PC-3 (cell line): ENCODE measurements at regions of chr20 and their contacts with region 1.

Region 1: GRCh38 chr20:56202493-56203077 is 45.9 kb upstream of the MC3R start:
- DNase-seq: peak; percentile 64
- ATAC-seq: peak; percentile 53
- H3K4me3 ChIP-seq: no peak overlapping the region
- H3K27ac ChIP-seq: no peak overlapping the region
- H3K4me1 ChIP-seq: no peaks in the 10 kb centered on the region
- H3K27me3 ChIP-seq: peaks cover 12% of the 10 kb centered on the region; the same call in 1 of the 2 replicates
- CTCF ChIP-seq: peak; percentile 78

Region 2: DNA sequence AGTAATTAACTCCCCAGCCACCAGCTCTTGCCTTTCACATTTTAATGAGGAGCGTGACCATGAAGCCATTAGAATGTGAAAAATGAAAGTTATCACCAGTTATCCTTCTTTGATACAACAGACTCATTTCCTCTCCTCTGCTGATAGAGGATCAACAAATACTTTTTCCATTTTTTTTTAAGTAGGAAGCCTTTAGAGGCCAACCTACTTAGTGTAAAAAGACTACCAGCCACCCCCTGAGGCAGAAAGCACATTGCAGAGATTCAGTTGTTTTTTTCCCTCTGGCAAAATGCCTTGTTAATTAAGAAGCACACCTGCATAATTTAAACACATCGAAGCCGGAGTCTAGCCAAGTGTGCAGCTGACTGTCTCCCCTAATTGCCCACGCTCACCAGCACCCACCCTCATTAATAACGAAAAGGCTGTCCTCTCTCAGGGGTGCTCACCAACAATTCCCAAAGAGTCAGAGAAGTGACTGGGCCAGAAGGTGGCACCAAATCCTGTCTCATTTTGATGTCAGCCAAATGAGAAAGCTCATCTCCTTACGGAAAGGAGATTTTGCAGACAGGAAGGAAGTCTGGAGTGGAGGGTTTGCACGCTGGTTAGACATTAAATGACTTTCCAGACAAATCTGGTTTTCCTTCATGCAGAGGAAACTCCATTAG is 14.9 kb before region 1 on chr20:
- CTCF ChIA-PET with region 1: no interaction called
- POLR2A ChIA-PET with region 1: no interaction called
- intact Hi-C with region 1: no loop called
- DNase-seq: peak; percentile 59
- ATAC-seq: peak; percentile 45; the same call in 1 of the 2 replicates
- H3K4me3 ChIP-seq: no peak overlapping the region
- H3K27ac ChIP-seq: no peak overlapping the region
- H3K4me1 ChIP-seq: no peaks in the 10 kb centered on the region
- H3K27me3 ChIP-seq: peaks cover 5% of the 10 kb centered on the region; the same call in 1 of the 2 replicates
- CTCF ChIP-seq: peak; percentile 67

Region 3: GRCh38 chr20:56574531-56575142 is 372.1 kb after region 1 on chr20:
- CTCF ChIA-PET with region 1: no interaction called
- POLR2A ChIA-PET with region 1: no interaction called
- intact Hi-C with region 1: loop called (anchors 5 kb)
- DNase-seq: peak; percentile 45
- ATAC-seq: peak; percentile 51; the same call in 1 of the 2 replicates
- H3K4me3 ChIP-seq: no peak overlapping the region
- H3K27ac ChIP-seq: no peak overlapping the region
- H3K4me1 ChIP-seq: peaks cover 9% of the 10 kb centered on the region
- H3K27me3 ChIP-seq: no peaks in the 10 kb centered on the region
- CTCF ChIP-seq: no peak